Naive thymus-derived CD4-positive, alpha-beta T cell (primary cell): ENCODE measurements at regions of chr15 and their contacts with region 1.

Region 1: GRCh38 chr15:33226559-33227181 is 32.2 kb upstream of the FMN1 start:
- DNase-seq: peak in 7 of 9 donors; percentile 4 to 84 (median 78)
- ATAC-seq: peak; percentile 99
- H3K4me3 ChIP-seq: no peak overlapping the region
- H3K4me3 Mint-ChIP-seq: peak overlapping the region in 4 of 10 donors; percentile 11 to 62 (median 53)
- H3K27ac ChIP-seq: no peak overlapping the region
- H3K27ac Mint-ChIP-seq: peak overlapping the region in 5 of 9 donors; percentile 61 to 76 (median 74)
- H3K4me1 ChIP-seq: peaks cover 7 to 16% of the 10 kb centered on the region in 2 donors
- H3K4me1 Mint-ChIP-seq: peaks cover 0 to 27% (median 19%) of the 10 kb centered on the region in 7 donors
- H3K27me3 ChIP-seq: no peaks in the 10 kb centered on the region
- H3K27me3 Mint-ChIP-seq: peaks cover 0 to 14% (median 0%) of the 10 kb centered on the region in 5 donors

Region 2: GRCh38 chr15:33154351-33155166 is 72.1 kb before region 1 on chr15:
- CTCF ChIA-PET with region 1: interaction called, 3 read pairs
- POLR2A ChIA-PET with region 1: no interaction called
- intact Hi-C with region 1: loop called in 1 of 2 experiments (anchors 5 kb)
- DNase-seq: no peak
- ATAC-seq: peak; percentile 71
- H3K4me3 ChIP-seq: no peak overlapping the region
- H3K4me3 Mint-ChIP-seq: no peak overlapping the region
- H3K27ac ChIP-seq: no peak overlapping the region
- H3K27ac Mint-ChIP-seq: peak overlapping the region in 3 of 9 donors; percentile 4 to 22 (median 8)
- H3K4me1 ChIP-seq: peaks cover 0 to 3% of the 10 kb centered on the region in 2 donors
- H3K4me1 Mint-ChIP-seq: peaks cover 0 to 37% (median 20%) of the 10 kb centered on the region in 7 donors
- H3K27me3 ChIP-seq: no peaks in the 10 kb centered on the region
- H3K27me3 Mint-ChIP-seq: peaks cover 0 to 17% (median 4%) of the 10 kb centered on the region in 5 donors

Region 3: GRCh38 chr15:33194704-33195670 is 31.7 kb before region 1 on chr15 and contains the start of gene FMN1:
- CTCF ChIA-PET with region 1: interaction called, 3 read pairs
- POLR2A ChIA-PET with region 1: interaction called, 4 read pairs
- intact Hi-C with region 1: loop called in 1 of 2 experiments (anchors 1 kb)
- DNase-seq: peak; percentile 61 to 92 (median 84)
- ATAC-seq: peak; percentile 100
- H3K4me3 ChIP-seq: peak within 1 kb of the TSS; percentile 83
- H3K4me3 Mint-ChIP-seq: peak within 1 kb of the TSS; percentile 71 to 92 (median 85)
- H3K27ac ChIP-seq: peak within 1 kb of the TSS; percentile 59
- H3K27ac Mint-ChIP-seq: peak within 1 kb of the TSS in 8 of 9 donors; percentile 77 to 95 (median 82)
- H3K4me1 ChIP-seq: peaks cover 0 to 9% of the 10 kb centered on the region in 2 donors
- H3K4me1 Mint-ChIP-seq: peaks cover 4 to 22% (median 14%) of the 10 kb centered on the region in 7 donors
- H3K27me3 ChIP-seq: no peaks in the 10 kb centered on the region
- H3K27me3 Mint-ChIP-seq: peaks cover 0 to 39% (median 0%) of the 10 kb centered on the region in 5 donors
- total RNA-seq, gene FMN1: 0.02 to 32.2 (median 0.70) TPM

Region 4: GRCh38 chr15:33215941-33216872 is 10.5 kb before region 1 on chr15:
- CTCF ChIA-PET with region 1: no interaction called
- POLR2A ChIA-PET with region 1: no interaction called
- intact Hi-C with region 1: loop called in 1 of 2 experiments (anchors 1 kb)
- DNase-seq: peak in 4 of 9 donors; percentile 19 to 35 (median 27)
- ATAC-seq: peak; percentile 71
- H3K4me3 ChIP-seq: no peak overlapping the region
- H3K4me3 Mint-ChIP-seq: no peak overlapping the region
- H3K27ac ChIP-seq: no peak overlapping the region
- H3K27ac Mint-ChIP-seq: no peak overlapping the region
- H3K4me1 ChIP-seq: no peaks in the 10 kb centered on the region
- H3K4me1 Mint-ChIP-seq: peaks cover 0 to under 1% (median 0%) of the 10 kb centered on the region in 7 donors
- H3K27me3 ChIP-seq: no peaks in the 10 kb centered on the region
- H3K27me3 Mint-ChIP-seq: no peaks in the 10 kb centered on the region